OCI-LY7 (cell line): ENCODE measurements at regions of chr1 and their contacts with region 1.

Region 1: DNA sequence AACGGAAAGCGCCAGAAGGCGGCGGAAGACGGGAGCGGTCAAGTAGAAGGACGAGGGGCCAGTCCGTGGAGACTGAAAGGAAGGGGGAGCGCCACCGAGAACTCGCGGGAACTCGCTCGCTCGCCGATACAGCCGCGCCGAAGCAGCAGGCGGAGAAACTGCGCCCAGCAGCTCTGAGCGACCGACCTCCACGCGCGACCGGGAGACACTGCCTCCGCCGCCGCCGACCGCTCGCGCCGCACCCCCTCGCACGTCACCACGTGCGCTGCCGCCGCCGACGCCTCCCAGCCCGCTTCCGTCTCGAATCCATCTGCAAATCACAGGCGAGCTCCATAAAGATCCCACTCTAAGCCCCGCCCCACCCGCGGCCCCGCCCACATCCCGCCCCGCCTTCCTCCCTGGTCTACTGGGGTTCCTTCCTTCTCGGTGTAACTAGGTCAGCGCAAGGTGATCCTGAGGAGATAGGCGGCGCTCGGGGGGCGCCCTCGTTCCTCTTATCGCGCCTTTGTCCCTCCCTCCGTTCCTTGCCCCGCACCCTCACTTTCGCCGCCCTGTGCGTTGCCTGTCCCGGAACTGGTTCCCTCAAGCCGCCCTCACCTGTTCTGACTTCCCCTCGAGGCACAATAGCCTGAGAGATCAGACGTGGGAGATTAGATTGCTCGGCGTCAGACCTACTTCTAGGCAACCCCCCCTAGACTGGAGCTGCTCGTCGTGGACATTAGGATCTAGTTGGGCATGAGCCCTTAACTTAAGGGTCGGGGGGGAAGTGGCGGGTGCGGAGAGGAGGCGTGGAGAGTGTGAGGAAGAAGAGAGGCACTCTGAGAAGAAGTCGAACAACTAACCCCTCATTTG is at the start of gene IVNS1ABP:
- DNase-seq: peak; percentile 95
- H3K4me3 ChIP-seq: peak within 1 kb of the TSS; percentile 87
- H3K27ac ChIP-seq: peak within 1 kb of the TSS; percentile 83
- H3K4me1 ChIP-seq: peaks cover 40% of the 10 kb centered on the region
- CTCF ChIP-seq: peak; percentile 67
- total RNA-seq, gene IVNS1ABP: 50.7 and 54.0 TPM in 2 replicates

Region 2: GRCh38 chr1:184754476-184755225 is 562.6 kb before region 1 on chr1 and contains the start of gene EDEM3:
- CTCF ChIA-PET with region 1: no interaction called
- POLR2A ChIA-PET with region 1: interaction called, 3 read pairs
- intact Hi-C with region 1: loop called (anchors 5 kb)
- DNase-seq: peak; percentile 98
- H3K4me3 ChIP-seq: peak within 1 kb of the TSS; percentile 81
- H3K27ac ChIP-seq: peak within 1 kb of the TSS; percentile 43
- H3K4me1 ChIP-seq: peaks cover 23% of the 10 kb centered on the region
- CTCF ChIP-seq: no peak
- total RNA-seq, gene EDEM3: 15.7 and 19.5 TPM in 2 replicates

Region 3: GRCh38 chr1:184973272-184974055 is 343.8 kb before region 1 on chr1:
- CTCF ChIA-PET with region 1: no interaction called
- POLR2A ChIA-PET with region 1: no interaction called
- intact Hi-C with region 1: no loop called
- DNase-seq: no peak
- H3K4me3 ChIP-seq: no peak overlapping the region
- H3K27ac ChIP-seq: no peak overlapping the region
- H3K4me1 ChIP-seq: no peaks in the 10 kb centered on the region
- CTCF ChIP-seq: no peak

Region 4: GRCh38 chr1:185156854-185157598 is 160.2 kb before region 1 on chr1 and contains the starts of genes SWT1 and TRMT1L:
- CTCF ChIA-PET with region 1: no interaction called
- POLR2A ChIA-PET with region 1: interaction called, 5 read pairs
- intact Hi-C with region 1: loop called (anchors 1 kb)
- DNase-seq: peak; percentile 97
- H3K4me3 ChIP-seq: peak within 1 kb of the TSS; percentile 89
- H3K27ac ChIP-seq: peak within 1 kb of the TSS; percentile 64
- H3K4me1 ChIP-seq: peaks cover 21% of the 10 kb centered on the region
- CTCF ChIP-seq: no peak
- total RNA-seq, gene SWT1: 2.1 and 2.3 TPM in 2 replicates
- total RNA-seq, gene TRMT1L: 10.8 and 15.0 TPM in 2 replicates

Region 5: DNA sequence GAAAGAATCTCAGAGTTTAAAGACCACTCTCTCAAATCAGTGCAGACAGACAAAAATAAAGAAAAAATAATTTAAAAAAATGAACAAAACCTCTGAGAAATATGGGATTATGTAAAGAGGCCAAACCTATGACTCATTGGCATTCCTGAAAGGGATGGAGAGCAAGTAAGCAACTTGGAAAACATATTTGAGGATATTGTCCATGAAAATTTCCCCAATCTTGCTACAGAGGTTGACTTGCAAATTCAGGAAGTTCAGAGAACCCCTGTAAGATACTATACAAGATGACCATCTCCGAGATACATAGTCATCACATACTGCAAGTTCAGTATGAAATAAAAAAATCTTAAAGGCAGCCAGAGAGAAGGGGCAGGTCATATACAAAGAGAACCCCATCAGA is 43.5 kb after region 1 on chr1:
- CTCF ChIA-PET with region 1: no interaction called
- POLR2A ChIA-PET with region 1: no interaction called
- intact Hi-C with region 1: no loop called
- DNase-seq: no peak
- H3K4me3 ChIP-seq: no peak overlapping the region
- H3K27ac ChIP-seq: no peak overlapping the region
- H3K4me1 ChIP-seq: no peaks in the 10 kb centered on the region
- CTCF ChIP-seq: no peak

Region 6: GRCh38 chr1:185608177-185608576 is 290.9 kb after region 1 on chr1:
- CTCF ChIA-PET with region 1: no interaction called
- POLR2A ChIA-PET with region 1: no interaction called
- intact Hi-C with region 1: no loop called
- DNase-seq: no peak
- H3K4me3 ChIP-seq: no peak overlapping the region
- H3K27ac ChIP-seq: no peak overlapping the region
- H3K4me1 ChIP-seq: no peaks in the 10 kb centered on the region
- CTCF ChIP-seq: no peak

Region 7: GRCh38 chr1:185681034-185681633 is 363.9 kb after region 1 on chr1:
- CTCF ChIA-PET with region 1: no interaction called
- POLR2A ChIA-PET with region 1: no interaction called
- intact Hi-C with region 1: loop called (anchors 5 kb)
- DNase-seq: peak; percentile 36
- H3K4me3 ChIP-seq: no peak overlapping the region
- H3K27ac ChIP-seq: no peak overlapping the region
- H3K4me1 ChIP-seq: no peaks in the 10 kb centered on the region
- CTCF ChIP-seq: peak; percentile 71

Region 8: GRCh38 chr1:186375088-186375953 is 1058.1 kb after region 1 on chr1 and contains the starts of genes ODR4 and TPR:
- CTCF ChIA-PET with region 1: no interaction called
- POLR2A ChIA-PET with region 1: no interaction called
- intact Hi-C with region 1: loop called (anchors 2 kb)
- DNase-seq: peak; percentile 97
- H3K4me3 ChIP-seq: peak within 1 kb of the TSS; percentile 77
- H3K27ac ChIP-seq: peak within 1 kb of the TSS; percentile 79
- H3K4me1 ChIP-seq: peaks cover 20% of the 10 kb centered on the region
- CTCF ChIP-seq: peak; percentile 96
- total RNA-seq, gene ODR4: 9.2 and 12.0 TPM in 2 replicates
- total RNA-seq, gene TPR: 81.8 and 92.1 TPM in 2 replicates